Activated T-helper 1 cell treated with anti-CD3 and anti-CD28 coated beads, Interleukin-12 subunit alpha, Interleukin-12 subunit beta, Interleukin-2, Interleukin-4 antibody, amounts not matched to agents 30 ng/mL and 10 ng/mL and 1 ng/mL, durations not matched to agents 14 hours and 24 hours and 36 hours (primary cell): ENCODE measurements at regions of chr12 and their contacts with region 1.

Region 1: DNA sequence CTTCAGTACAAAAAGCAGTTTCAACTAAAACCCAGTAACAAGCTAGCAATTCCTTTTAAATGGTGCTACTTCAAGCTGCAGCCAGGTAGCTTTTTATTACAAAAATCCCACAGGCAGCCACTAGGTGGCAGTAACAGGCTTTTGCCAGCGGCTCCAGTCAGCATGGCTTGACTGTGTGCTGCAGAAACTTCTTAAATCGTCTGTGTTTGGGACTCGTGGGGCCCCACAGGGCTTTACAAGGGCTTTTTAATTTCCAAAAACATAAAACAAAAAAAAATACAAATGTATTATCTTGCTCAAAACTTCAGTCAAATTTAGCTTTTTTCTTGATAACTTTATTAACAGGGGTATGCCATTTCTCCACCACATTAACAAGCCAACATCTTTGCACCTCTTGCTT is 3.6 kb upstream of the CLEC4E start:
- DNase-seq: peak; percentile 54
- H3K4me3 Mint-ChIP-seq: no peak overlapping the region
- H3K27ac Mint-ChIP-seq: no peak overlapping the region
- H3K4me1 Mint-ChIP-seq: no peaks in the 10 kb centered on the region
- H3K27me3 Mint-ChIP-seq: peaks cover 44% of the 10 kb centered on the region

Region 2: GRCh38 chr12:8609061-8609570 is 64.8 kb after region 1 on chr12:
- intact Hi-C with region 1: loop called (anchors 1 kb)
- DNase-seq: no peak
- H3K4me3 Mint-ChIP-seq: peak overlapping the region; percentile 25
- H3K27ac Mint-ChIP-seq: no peak overlapping the region
- H3K4me1 Mint-ChIP-seq: peaks cover 10% of the 10 kb centered on the region
- H3K27me3 Mint-ChIP-seq: peaks cover 23% of the 10 kb centered on the region

Region 3: DNA sequence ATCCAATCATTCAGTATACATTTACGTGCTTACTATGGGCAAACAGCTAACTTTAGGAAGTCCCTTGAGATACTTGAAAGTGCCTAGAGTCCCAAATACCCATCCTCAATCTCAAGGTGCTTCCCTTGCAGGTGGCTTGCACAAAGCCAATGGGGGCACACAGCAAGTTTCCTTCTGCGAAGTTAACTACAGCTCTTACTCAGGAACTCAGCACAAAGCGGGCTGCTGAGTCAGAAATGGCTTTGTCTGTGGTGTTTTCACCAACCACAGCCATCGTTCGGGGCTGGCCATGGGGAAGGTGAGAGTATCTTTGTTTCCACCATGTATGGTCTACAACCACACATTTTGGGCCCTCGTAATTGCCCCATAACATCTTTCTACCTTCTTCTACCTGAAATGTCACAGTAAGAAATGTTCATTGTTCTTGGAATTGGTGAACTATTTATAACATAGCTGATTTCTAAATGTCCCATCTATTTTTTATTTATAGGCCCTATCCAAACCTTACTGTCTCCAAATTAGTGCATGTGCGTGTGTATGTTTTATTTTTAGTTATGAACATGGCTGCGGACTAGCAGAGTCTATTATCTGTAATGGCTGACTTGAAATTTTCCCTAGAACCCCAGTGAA is 104.4 kb after region 1 on chr12:
- intact Hi-C with region 1: loop called (anchors 2 kb)
- DNase-seq: peak; percentile 67
- H3K4me3 Mint-ChIP-seq: no peak overlapping the region
- H3K27ac Mint-ChIP-seq: peak overlapping the region; percentile 54
- H3K4me1 Mint-ChIP-seq: peaks cover 45% of the 10 kb centered on the region
- H3K27me3 Mint-ChIP-seq: peaks cover 53% of the 10 kb centered on the region

Region 4: DNA sequence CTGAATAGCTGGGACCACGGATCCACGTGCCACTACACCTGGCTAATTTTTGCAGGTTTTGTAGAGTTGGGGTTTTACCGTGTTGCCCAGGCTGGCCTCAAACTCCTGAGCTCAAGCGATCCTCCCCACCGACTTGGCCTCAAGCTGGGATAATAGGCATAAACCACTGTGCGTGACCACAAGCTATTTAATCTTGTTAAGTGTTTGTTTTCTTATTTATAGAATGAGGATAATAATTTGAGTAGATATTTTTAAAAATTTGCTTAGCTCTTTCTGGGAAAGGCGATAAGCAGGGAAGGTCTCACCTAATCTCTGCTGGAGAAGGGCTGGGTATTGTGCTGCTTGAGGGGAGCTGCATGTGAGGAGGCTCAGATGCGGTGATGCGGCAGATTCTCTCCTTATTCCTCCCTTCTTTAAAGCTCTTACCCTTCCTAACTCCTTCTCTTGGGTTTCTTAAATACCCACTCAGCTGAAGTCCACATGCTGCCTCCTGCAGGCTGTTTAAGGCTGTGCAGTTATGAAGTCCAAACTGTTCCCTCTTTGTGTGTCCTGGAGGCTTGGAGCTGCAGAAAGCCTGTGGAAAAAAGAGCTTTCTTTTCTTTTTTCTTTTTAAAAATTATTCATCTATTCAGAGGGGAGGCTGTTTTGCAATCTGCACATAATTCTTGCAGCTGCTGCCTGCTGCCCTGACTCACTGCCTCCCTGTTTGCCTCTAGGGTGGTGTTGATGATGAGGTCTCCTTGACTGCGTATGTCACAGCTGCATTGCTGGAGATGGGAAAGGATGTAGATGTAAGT is 316.1 kb after region 1 on chr12:
- intact Hi-C with region 1: loop called (anchors 1 kb)
- DNase-seq: no peak
- H3K4me3 Mint-ChIP-seq: no peak overlapping the region
- H3K27ac Mint-ChIP-seq: no peak overlapping the region
- H3K4me1 Mint-ChIP-seq: no peaks in the 10 kb centered on the region
- H3K27me3 Mint-ChIP-seq: peaks cover 5% of the 10 kb centered on the region

Region 5: DNA sequence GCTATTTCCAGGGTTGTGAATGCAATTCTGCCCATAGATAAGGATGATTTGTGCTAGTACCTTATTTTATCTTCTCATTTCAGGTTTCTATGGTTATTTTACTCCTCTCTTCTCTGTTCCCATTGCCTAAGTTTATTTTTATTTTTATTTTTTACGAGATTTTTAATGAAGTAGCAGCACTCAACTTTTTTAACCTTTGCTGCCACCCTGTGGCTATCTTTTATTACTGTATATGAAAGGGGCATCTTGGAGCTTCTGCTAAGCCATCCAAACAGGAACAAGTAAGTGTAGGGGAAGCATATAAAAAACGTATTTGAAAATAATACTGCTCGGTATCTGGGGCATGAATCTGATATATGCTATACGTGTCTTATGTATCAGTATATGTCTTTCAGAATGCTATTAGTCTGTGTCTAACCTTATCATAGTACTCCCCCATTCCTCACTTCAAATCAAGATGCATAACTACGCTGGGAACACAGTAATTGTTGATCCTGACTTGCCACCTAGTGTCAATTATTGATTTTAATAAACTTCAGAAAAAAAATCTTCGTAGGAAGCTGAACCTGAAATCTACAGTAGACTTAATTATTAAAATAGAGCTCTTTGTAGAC is 505.3 kb after region 1 on chr12:
- intact Hi-C with region 1: loop called (anchors 1 kb)
- DNase-seq: no peak
- H3K4me3 Mint-ChIP-seq: no peak overlapping the region
- H3K27ac Mint-ChIP-seq: no peak overlapping the region
- H3K4me1 Mint-ChIP-seq: no peaks in the 10 kb centered on the region
- H3K27me3 Mint-ChIP-seq: peaks cover 18% of the 10 kb centered on the region